ENCODE measurements at regions of chr7 and their contacts with region 1.

Region 1: DNA sequence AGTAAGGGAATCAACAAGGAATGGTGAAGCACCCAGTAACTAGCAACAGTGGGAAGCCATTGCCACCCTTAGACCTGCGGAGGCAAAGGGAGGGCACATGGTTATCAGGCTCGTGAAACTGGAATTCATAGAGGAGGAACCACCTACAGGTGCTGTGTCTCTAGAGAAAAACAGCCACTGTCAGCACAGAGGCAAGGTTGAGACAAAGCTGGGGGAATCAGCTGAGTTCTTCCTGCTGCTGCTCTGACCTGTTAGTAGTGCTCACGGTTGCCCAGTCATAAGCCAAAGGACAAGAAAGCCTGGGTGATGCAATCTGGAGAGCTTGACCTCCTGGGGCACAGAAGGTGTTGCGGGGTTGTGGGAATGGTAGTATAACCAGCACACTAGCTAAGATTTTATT is 110.1 kb downstream of the TPST1 start:
- DNase-seq: no peak
- ATAC-seq: no peak
- H3K4me3 ChIP-seq: no peak overlapping the region
- H3K27ac ChIP-seq: no peak overlapping the region
- H3K4me1 ChIP-seq: peaks cover 0 to 2% of the 10 kb centered on the region in 2 experiments; a peak in 1 of 4 replicates
- H3K27me3 ChIP-seq: no peaks in the 10 kb centered on the region
- CTCF ChIP-seq: no peak
- POLR2A ChIP-seq: no peak
- RAD21 ChIP-seq: no peak

Region 2: GRCh38 chr7:64914557-64914956 is 1400.6 kb before region 1 on chr7:
- CTCF ChIA-PET with region 1: no interaction called
- POLR2A ChIA-PET with region 1: no interaction called
- RAD21 ChIA-PET with region 1: no interaction called
- intact Hi-C with region 1: no loop called
- DNase-seq: no peak
- ATAC-seq: no peak
- H3K4me3 ChIP-seq: no peak overlapping the region
- H3K27ac ChIP-seq: no peak overlapping the region
- H3K4me1 ChIP-seq: no peaks in the 10 kb centered on the region
- H3K27me3 ChIP-seq: no peaks in the 10 kb centered on the region
- CTCF ChIP-seq: no peak
- POLR2A ChIP-seq: no peak
- RAD21 ChIP-seq: no peak

Region 3: GRCh38 chr7:66114793-66115649 is 200.2 kb before region 1 on chr7 and contains the start of gene CRCP:
- CTCF ChIA-PET with region 1: no interaction called
- POLR2A ChIA-PET with region 1: no interaction called
- RAD21 ChIA-PET with region 1: interaction called in 1 of 2 experiments, 12 read pairs
- intact Hi-C with region 1: no loop called
- DNase-seq: no peak
- ATAC-seq: peak; percentile 75
- H3K4me3 ChIP-seq: peak within 1 kb of the TSS; percentile 86 to 91
- H3K27ac ChIP-seq: peak within 1 kb of the TSS; percentile 87
- H3K4me1 ChIP-seq: peaks cover 22 to 41% of the 10 kb centered on the region in 2 experiments
- H3K27me3 ChIP-seq: no peaks in the 10 kb centered on the region
- CTCF ChIP-seq: 0 out of 6 replicates have a peak, but pooled peaks of 1 of the 3 experiments have one; percentile 2
- POLR2A ChIP-seq: peak; percentile 44
- RAD21 ChIP-seq: peak; percentile 33; the same call in 1 of the 2 replicates
- total RNA-seq, gene CRCP: 28.4 TPM

Region 4: DNA sequence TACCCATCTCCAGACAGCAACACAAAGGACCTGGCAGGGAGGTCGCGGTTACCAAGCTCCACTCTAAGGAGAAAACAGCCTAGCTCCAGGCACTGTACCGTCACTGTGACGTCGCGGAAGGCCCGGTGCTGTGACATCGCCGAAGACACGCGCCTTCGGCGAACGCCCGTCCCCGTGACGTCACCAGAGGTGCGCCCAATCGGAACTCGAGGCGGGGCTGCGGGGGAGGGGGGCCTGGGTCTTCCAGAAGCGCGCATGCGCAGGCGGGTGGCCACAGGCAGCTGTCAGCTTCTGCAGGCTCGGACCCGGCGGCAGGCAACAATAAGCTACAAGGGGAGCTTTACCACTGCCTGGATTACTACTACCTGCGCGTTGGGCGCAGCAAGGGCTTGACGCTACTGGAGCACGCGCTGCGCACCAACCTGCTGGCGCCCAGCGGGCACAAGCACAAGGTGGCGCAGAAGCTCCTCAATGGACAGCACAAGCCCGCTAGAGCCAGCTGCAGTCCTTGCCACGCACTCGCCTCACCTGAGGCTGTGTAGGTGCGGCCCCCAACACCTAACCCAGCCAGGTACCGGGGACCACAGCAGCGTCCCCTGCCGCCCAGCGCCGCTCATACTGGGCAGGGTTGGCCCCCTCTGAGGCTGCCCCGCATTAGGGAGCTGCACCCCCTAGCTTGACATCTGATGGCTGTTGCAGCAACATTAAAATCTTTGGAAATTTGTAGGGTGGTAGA is 98.4 kb after region 1 on chr7:
- CTCF ChIA-PET with region 1: no interaction called
- POLR2A ChIA-PET with region 1: no interaction called
- RAD21 ChIA-PET with region 1: no interaction called
- intact Hi-C with region 1: no loop called
- DNase-seq: no peak
- ATAC-seq: no peak
- H3K4me3 ChIP-seq: no peak overlapping the region
- H3K27ac ChIP-seq: no peak overlapping the region
- H3K4me1 ChIP-seq: no peaks in the 10 kb centered on the region
- H3K27me3 ChIP-seq: no peaks in the 10 kb centered on the region
- CTCF ChIP-seq: no peak
- POLR2A ChIP-seq: no peak
- RAD21 ChIP-seq: no peak

Region 5: DNA sequence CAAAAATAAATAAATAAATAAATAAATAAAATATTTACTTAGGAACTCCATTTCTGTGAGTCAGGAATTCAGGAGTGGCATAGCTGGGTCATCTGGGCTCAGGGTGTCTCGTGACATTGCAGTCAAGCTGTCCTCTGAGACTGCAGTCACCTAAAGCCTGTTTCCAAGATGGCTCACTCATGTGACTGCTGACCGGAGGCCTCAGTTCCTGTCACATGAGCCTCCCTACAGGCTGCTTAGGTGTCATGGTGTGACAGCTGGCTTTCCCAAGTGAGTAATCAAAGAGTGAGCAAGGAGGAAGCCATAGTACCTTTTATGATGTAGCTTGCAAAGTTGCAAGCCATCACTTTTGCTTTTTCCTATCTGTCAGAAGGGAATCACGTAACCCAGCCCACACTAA is 184.9 kb after region 1 on chr7:
- CTCF ChIA-PET with region 1: no interaction called
- POLR2A ChIA-PET with region 1: no interaction called
- RAD21 ChIA-PET with region 1: no interaction called
- intact Hi-C with region 1: no loop called
- DNase-seq: peak; percentile 18
- ATAC-seq: peak; percentile 72
- H3K4me3 ChIP-seq: no peak overlapping the region
- H3K27ac ChIP-seq: no peak overlapping the region
- H3K4me1 ChIP-seq: no peaks in the 10 kb centered on the region; a peak in 1 of 4 replicates
- H3K27me3 ChIP-seq: no peaks in the 10 kb centered on the region
- CTCF ChIP-seq: no peak
- POLR2A ChIP-seq: no peak
- RAD21 ChIP-seq: no peak